Endothelial cell of umbilical vein (primary cell): ENCODE measurements at regions of chr16 and their contacts with region 1.

Region 1: GRCh38 chr16:57648590-57649442 is 19.3 kb upstream of the ADGRG3 start:
- DNase-seq: peak; percentile 84
- H3K4me3 ChIP-seq: no peak overlapping the region
- H3K27ac ChIP-seq: peak overlapping the region; percentile 14
- H3K4me1 ChIP-seq: peaks cover 37% of the 10 kb centered on the region
- H3K27me3 ChIP-seq: no peaks in the 10 kb centered on the region
- CTCF ChIP-seq: peak; percentile 100
- POLR2A ChIP-seq: no peak

Region 2: GRCh38 chr16:57576429-57576870 is 72.4 kb before region 1 on chr16:
- CTCF ChIA-PET with region 1: interaction called, 62 read pairs
- POLR2A ChIA-PET with region 1: no interaction called
- dilution Hi-C with region 1: no loop called
- intact Hi-C with region 1: loop called (anchors 1 kb)
- DNase-seq: peak; percentile 68
- H3K4me3 ChIP-seq: no peak overlapping the region
- H3K27ac ChIP-seq: no peak overlapping the region
- H3K4me1 ChIP-seq: no peaks in the 10 kb centered on the region
- H3K27me3 ChIP-seq: no peaks in the 10 kb centered on the region
- CTCF ChIP-seq: peak; percentile 96 to 99
- POLR2A ChIP-seq: no peak

Region 3: GRCh38 chr16:57609541-57610401 is 39.0 kb before region 1 on chr16:
- CTCF ChIA-PET with region 1: interaction called, 18 read pairs
- POLR2A ChIA-PET with region 1: interaction called, 3 read pairs
- dilution Hi-C with region 1: no loop called
- intact Hi-C with region 1: no loop called
- DNase-seq: peak; percentile 53
- H3K4me3 ChIP-seq: no peak overlapping the region
- H3K27ac ChIP-seq: no peak overlapping the region
- H3K4me1 ChIP-seq: no peaks in the 10 kb centered on the region
- H3K27me3 ChIP-seq: no peaks in the 10 kb centered on the region
- CTCF ChIP-seq: peak in 1 of 2 donors; percentile 36
- POLR2A ChIP-seq: no peak

Region 4: GRCh38 chr16:57634171-57634570 is 14.6 kb before region 1 on chr16:
- CTCF ChIA-PET with region 1: interaction called, 31 read pairs
- POLR2A ChIA-PET with region 1: interaction called, 3 read pairs
- dilution Hi-C with region 1: no loop called
- intact Hi-C with region 1: loop called (anchors 1 kb)
- DNase-seq: no peak
- H3K4me3 ChIP-seq: no peak overlapping the region
- H3K27ac ChIP-seq: peak overlapping the region; percentile 64
- H3K4me1 ChIP-seq: peaks cover 68% of the 10 kb centered on the region
- H3K27me3 ChIP-seq: no peaks in the 10 kb centered on the region
- CTCF ChIP-seq: no peak
- POLR2A ChIP-seq: no peak

Region 5: GRCh38 chr16:57734925-57735754 is 86.3 kb after region 1 on chr16:
- CTCF ChIA-PET with region 1: interaction called, 5 read pairs
- POLR2A ChIA-PET with region 1: no interaction called
- dilution Hi-C with region 1: no loop called
- intact Hi-C with region 1: loop called (anchors 2 kb)
- DNase-seq: peak; percentile 100
- H3K4me3 ChIP-seq: peak overlapping the region; percentile 72 to 93 (median 74)
- H3K27ac ChIP-seq: peak overlapping the region; percentile 81
- H3K4me1 ChIP-seq: peaks cover 19% of the 10 kb centered on the region
- H3K27me3 ChIP-seq: no peaks in the 10 kb centered on the region
- CTCF ChIP-seq: no peak
- POLR2A ChIP-seq: peak; percentile 58

Region 6: DNA sequence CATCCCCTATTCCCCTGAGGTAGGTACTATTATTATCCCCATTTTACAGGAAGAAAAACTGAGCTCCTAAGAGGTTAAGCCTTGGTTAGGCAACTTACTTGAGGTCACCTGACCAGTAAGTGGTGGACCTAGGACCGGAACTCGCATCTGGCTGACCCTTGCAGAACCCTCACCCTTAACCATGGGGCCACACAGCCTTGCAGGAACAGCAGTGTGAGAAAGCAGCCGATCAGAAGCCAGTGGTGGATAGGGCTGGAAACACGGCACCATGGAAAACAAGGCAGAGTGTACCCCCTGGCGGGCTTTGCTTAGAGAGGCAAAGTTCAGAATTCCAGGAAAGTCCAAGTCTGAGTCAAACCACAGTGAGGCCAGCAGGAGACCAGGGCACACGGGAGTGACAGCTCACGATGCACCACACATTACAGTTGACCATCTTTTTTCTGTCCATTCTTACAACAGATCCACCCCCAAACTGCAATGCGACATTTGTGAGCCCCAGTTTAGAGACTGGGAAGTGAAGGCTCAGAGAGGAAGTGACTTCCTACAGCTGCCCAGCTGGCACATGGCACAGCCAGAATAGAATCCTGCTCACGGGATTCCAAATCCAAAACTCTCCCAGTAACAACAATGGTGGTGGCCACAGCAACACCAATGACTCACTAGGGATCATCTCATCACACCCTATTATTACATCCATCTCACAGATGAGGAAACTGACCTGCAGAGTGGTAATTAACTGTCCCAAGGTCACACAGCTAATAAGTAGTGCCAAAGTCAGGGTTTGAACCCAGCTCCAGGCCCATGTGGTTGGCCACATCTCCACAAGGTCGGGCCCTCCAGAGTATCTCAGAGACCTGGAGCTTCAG is 133.2 kb after region 1 on chr16:
- CTCF ChIA-PET with region 1: no interaction called
- POLR2A ChIA-PET with region 1: no interaction called
- dilution Hi-C with region 1: no loop called
- intact Hi-C with region 1: no loop called
- DNase-seq: no peak
- H3K4me3 ChIP-seq: no peak overlapping the region
- H3K27ac ChIP-seq: peak overlapping the region; percentile 33
- H3K4me1 ChIP-seq: peaks cover 2% of the 10 kb centered on the region
- H3K27me3 ChIP-seq: no peaks in the 10 kb centered on the region
- CTCF ChIP-seq: no peak
- POLR2A ChIP-seq: no peak